Heart right ventricle (tissue), 16 donors: ENCODE measurements at regions of chr13 and their contacts with region 1.

Region 1: GRCh38 chr13:36115285-36115684 is 15.9 kb downstream of the DCLK1 start:
- DNase-seq: no peak
- ATAC-seq: no peak
- H3K4me3 ChIP-seq: no peak overlapping the region
- H3K27ac ChIP-seq: no peak overlapping the region
- H3K4me1 ChIP-seq: peaks cover 0 to 20% (median 4%) of the 10 kb centered on the region in 9 donors
- H3K27me3 ChIP-seq: no peaks in the 10 kb centered on the region
- CTCF ChIP-seq: no peak

Region 2: DNA sequence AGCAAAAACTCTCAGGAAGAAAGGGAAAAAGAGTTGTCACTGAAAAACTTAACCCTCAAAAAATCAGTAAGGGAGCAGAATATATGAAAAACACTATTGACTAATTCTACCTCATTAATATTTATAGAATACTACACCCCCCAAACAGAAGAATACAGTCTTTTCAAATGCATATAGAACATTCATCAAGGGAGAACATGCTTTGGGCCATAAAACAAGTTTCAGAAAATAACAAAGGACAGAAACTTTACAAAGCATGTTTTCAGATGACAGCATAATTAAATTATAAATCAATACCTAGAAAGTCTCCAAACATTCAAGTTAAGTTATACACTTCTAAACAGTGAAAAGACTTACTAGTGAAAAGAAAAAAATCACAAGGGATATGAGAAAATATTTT is 68.6 kb after region 1 on chr13:
- intact Hi-C with region 1: loop called in 1 of 10 experiments (anchors 10 kb)
- DNase-seq: no peak
- ATAC-seq: no peak
- H3K4me3 ChIP-seq: no peak overlapping the region
- H3K27ac ChIP-seq: no peak overlapping the region
- H3K4me1 ChIP-seq: no peaks in the 10 kb centered on the region
- H3K27me3 ChIP-seq: no peaks in the 10 kb centered on the region
- CTCF ChIP-seq: no peak

Region 3: DNA sequence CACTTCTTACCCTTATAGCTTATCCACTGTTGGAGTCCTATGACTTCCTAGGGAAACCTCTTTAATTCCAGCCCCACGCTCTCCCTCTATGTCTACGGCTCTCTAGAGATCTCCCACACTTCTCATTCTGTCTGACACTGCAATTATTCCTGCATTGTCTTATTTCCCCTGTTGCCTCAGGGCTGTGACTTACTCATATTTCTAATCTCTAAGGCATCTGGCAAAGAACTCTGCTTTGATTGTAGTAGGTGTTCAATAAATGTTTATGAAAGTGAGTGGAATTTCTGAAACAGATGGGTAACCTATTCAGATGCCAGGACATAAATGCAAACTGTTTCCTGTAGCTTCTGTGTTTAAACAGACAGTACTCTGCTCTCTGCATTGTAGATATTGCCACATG is 456.2 kb after region 1 on chr13:
- intact Hi-C with region 1: no loop called
- DNase-seq: no peak
- ATAC-seq: no peak
- H3K4me3 ChIP-seq: no peak overlapping the region
- H3K27ac ChIP-seq: no peak overlapping the region
- H3K4me1 ChIP-seq: no peaks in the 10 kb centered on the region
- H3K27me3 ChIP-seq: no peaks in the 10 kb centered on the region
- CTCF ChIP-seq: no peak